Activated CD4-positive, alpha-beta T cell treated with anti-CD3 and anti-CD28 coated beads for 36 hours (primary cell): ENCODE measurements at regions of chr9 and their contacts with region 1.

Region 1: GRCh38 chr9:75588809-75589208 is 301.7 kb upstream of the PCSK5 start:
- DNase-seq: peak; percentile 7
- ATAC-seq: no peak
- H3K4me3 Mint-ChIP-seq: no peak overlapping the region
- H3K27ac Mint-ChIP-seq: no peak overlapping the region
- H3K4me1 Mint-ChIP-seq: no peaks in the 10 kb centered on the region
- H3K27me3 Mint-ChIP-seq: peaks cover 5% of the 10 kb centered on the region

Region 2: DNA sequence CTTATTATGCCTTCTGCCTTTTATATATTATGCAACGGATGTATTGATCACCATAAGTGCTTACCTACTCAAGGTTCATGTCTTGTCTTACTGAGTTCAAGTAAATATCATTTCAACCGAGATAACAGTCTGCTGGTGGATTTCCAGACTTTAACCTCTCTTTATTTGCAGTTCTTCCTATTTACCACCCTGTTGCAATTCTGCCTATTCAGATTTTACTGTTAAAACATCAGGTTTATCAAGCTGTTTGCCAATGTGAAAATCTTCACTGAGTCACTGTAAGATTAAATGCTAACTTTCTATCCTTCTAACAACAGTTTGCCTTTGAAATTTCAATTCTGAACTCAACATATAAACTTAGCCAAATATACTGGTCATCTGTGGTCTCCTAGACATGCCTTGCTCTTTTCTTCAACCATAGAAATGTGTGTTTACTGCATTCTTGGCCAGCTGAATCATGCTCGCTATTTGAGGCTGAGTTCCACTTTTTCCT is 1563.4 kb before region 1 on chr9:
- CTCF ChIA-PET with region 1: no interaction called
- POLR2A ChIA-PET with region 1: no interaction called
- intact Hi-C with region 1: no loop called
- DNase-seq: no peak
- ATAC-seq: no peak
- H3K4me3 Mint-ChIP-seq: no peak overlapping the region
- H3K27ac Mint-ChIP-seq: no peak overlapping the region
- H3K4me1 Mint-ChIP-seq: no peaks in the 10 kb centered on the region
- H3K27me3 Mint-ChIP-seq: no peaks in the 10 kb centered on the region

Region 3: GRCh38 chr9:75539523-75539922 is 49.3 kb before region 1 on chr9:
- CTCF ChIA-PET with region 1: no interaction called
- POLR2A ChIA-PET with region 1: no interaction called
- intact Hi-C with region 1: loop called in 1 of 2 experiments (anchors 5 kb)
- DNase-seq: no peak
- ATAC-seq: no peak
- H3K4me3 Mint-ChIP-seq: no peak overlapping the region
- H3K27ac Mint-ChIP-seq: no peak overlapping the region
- H3K4me1 Mint-ChIP-seq: no peaks in the 10 kb centered on the region
- H3K27me3 Mint-ChIP-seq: peaks cover 2% of the 10 kb centered on the region

Region 4: DNA sequence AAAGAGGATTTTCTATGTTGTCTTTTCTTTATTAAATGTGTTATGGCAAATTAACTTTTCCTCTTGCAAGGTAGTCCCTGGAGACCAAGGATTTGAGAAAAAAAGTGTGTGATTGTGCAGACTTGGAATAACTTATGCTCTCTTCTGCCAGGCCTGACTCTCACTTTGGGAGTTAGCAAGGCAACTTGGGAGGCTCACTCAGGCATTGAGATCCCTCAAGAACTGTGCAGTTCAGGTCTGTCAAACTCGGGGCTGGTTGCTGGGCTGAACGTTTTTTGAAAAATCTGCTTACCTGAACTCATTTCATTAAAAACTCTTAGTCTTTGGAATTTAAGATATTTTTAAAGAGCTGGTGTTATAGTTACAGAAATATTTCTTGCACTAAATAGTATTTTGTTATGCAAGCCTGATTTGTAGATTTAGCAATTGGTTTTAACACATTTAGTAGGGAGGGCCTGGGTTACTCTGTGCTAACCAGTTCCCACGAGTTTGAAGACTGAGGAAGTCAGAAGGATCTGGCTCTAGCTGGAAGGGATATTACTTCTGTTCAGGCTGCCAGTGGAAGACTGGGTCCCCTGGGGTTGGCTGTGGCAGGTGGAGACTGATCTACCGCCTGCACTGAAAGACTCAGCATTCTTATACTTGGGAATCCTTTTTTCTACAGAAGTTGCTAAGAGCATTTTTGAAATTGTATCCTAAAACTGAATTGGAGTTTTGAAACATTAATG is 151.2 kb after region 1 on chr9:
- CTCF ChIA-PET with region 1: no interaction called
- POLR2A ChIA-PET with region 1: no interaction called
- intact Hi-C with region 1: no loop called
- DNase-seq: no peak
- ATAC-seq: no peak
- H3K4me3 Mint-ChIP-seq: no peak overlapping the region
- H3K27ac Mint-ChIP-seq: no peak overlapping the region
- H3K4me1 Mint-ChIP-seq: no peaks in the 10 kb centered on the region
- H3K27me3 Mint-ChIP-seq: peaks cover 7% of the 10 kb centered on the region